Thyroid gland (tissue), 4 donors: ENCODE measurements at regions of chr16 and their contacts with region 1.

Region 1: GRCh38 chr16:48499923-48500381 is 110.0 kb downstream of the N4BP1 start:
- DNase-seq: peak; percentile 56 to 62
- H3K4me3 ChIP-seq: no peak overlapping the region
- H3K27ac ChIP-seq: peak overlapping the region; percentile 83 to 95 (median 85)
- H3K4me1 ChIP-seq: peaks cover 26 to 38% of the 10 kb centered on the region in 2 donors
- H3K27me3 ChIP-seq: no peaks in the 10 kb centered on the region
- CTCF ChIP-seq: no peak
- POLR2A ChIP-seq: no peak

Region 2: GRCh38 chr16:48426244-48427141 is 73.5 kb before region 1 on chr16:
- intact Hi-C with region 1: loop called (anchors 10 kb)
- DNase-seq: peak; percentile 47 to 63
- H3K4me3 ChIP-seq: no peak overlapping the region
- H3K27ac ChIP-seq: peak overlapping the region in 2 of 3 donors; percentile 23 to 44
- H3K4me1 ChIP-seq: peaks cover 0 to 14% of the 10 kb centered on the region in 2 donors
- H3K27me3 ChIP-seq: no peaks in the 10 kb centered on the region
- CTCF ChIP-seq: no peak
- POLR2A ChIP-seq: no peak